AG04449 (cell line): ENCODE measurements at regions of chr10 and their contacts with region 1.

Region 1: DNA sequence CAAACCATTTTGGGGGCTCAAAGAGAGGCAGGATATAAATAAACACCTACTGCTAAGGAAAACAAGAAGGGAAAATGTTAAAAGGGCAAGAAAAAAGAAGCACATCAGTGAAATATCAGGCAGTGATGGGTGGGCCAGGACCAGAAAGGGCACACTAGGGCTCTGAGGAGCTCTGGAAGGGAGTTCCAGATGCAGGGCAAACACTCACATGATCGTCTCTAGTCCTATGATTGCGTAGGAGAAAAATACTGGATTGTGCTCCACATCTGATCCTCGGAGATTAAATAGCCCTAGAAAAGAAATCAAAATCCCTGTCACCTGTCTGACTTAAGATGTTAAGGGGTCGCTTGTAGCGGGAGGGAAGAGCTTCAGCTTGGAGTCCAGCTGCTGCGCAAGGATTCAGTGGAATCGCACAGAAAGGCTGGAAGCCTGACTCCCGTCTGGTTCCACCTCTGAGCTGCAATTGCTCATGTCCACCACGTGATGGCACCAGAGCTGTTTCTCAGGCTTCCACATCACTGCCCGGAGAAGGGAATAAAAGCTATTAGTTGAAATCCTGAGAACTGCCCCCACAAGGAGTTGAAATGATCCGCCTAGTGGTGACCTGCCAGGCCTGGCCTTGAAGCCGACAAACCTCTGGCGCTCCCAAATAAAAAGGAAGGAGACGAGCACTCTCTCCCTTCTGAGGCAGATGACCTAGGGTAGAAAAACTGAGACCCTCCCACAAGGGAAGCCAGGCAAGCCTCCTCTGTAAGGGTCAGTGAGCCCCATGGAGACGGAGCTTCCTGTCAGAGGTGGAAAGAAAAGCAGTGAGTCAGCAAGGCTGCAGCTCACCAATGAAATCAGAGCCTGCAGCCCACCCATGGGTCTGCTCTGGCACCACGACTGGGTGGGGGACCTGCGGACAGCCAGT is 39.2 kb downstream of the XPNPEP1 start:
- DNase-seq: peak; percentile 54
- H3K4me3 ChIP-seq: no peak overlapping the region
- CTCF ChIP-seq: peak; percentile 80

Region 2: DNA sequence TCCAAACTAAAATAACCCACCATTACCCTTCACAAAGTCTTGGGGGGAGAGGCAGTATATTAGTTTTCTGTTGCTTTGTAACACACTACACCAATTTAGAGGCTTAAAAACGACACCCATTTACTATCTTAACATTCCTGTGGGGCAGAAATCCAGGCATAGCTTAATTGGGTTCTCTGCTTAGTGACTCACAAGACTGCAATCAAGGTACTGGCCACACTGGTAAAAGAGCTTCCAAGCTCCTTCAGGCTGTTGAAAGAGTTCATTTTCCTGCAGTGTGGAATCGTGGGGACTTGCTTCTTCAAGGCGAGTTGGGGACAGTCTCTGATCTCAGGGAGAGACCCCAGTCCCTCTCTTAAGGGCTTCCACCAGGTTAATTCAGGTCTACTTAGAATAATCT is 99.9 kb before region 1 on chr10:
- CTCF ChIA-PET with region 1: no interaction called
- POLR2A ChIA-PET with region 1: no interaction called
- DNase-seq: peak; percentile 14
- H3K4me3 ChIP-seq: no peak overlapping the region
- CTCF ChIP-seq: no peak

Region 3: GRCh38 chr10:109914966-109915365 is 30.9 kb after region 1 on chr10:
- CTCF ChIA-PET with region 1: interaction called, 13 read pairs
- POLR2A ChIA-PET with region 1: no interaction called
- DNase-seq: peak; percentile 70
- H3K4me3 ChIP-seq: no peak overlapping the region
- CTCF ChIP-seq: no peak

Region 4: DNA sequence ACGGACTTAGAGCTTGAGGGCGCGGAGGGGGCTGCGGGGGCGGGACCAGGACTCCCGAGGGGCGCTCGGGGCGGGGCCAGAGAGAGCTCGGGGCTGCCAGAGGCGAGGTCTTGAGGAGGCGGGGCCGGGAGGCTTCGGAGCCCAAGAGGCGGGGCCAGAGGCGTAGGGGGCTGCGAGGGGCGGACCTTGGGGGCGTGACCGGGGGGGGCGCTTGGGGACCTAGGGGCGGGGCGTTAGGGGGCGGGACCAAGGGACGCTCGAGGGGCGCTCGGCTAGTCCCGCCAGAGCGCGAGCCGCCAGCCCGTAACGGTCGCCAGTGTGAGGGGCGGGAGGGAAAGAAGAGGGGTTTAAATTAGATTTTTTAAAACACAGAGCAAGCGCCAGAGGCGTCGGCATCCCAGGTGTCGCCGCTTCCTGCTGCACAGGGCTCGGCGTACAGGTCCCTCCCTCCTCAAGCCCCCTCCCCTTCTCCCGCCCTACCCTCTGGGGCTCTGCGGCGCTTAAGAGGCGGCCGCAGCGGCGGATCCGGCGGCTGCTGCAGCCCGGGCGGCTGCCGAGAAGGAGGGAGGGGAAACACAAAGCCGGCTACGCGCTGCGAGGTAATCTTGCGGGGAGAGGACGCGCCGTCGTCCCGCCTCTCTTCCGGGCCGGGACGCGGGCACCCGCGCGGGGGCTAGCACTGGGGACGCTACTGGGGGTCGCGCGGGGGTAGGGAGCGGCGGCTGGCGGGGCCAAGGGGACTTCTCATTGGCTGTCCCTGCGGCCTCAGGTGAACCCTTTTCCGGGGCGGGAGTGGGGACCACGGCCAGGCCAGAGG is 123.8 kb after region 1 on chr10 and contains the start of gene ADD3:
- CTCF ChIA-PET with region 1: interaction called, 18 read pairs
- POLR2A ChIA-PET with region 1: interaction called, 6 read pairs
- DNase-seq: peak; percentile 55
- H3K4me3 ChIP-seq: peak within 1 kb of the TSS; percentile 82
- CTCF ChIP-seq: no peak

Region 5: DNA sequence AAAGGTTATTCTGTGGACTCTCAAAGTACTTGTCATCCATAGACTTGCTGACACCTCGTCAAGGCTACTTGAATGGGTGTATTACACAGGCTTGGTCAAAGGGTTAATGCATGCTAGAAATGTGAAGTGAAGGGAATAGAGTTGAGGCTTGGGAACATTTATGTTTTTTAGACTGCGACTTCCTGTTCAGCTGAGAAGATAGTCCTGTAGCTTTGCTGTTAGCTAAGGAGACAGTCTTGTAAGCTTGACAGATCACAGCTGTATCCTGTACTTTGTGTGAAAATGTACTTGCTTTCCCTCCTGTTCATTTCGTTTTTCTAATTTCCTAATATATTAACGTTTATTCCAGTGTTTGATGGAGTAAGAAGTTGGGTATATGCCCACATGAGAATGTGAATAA is 175.8 kb after region 1 on chr10:
- CTCF ChIA-PET with region 1: interaction called, 13 read pairs
- POLR2A ChIA-PET with region 1: no interaction called
- DNase-seq: no peak
- H3K4me3 ChIP-seq: no peak overlapping the region
- CTCF ChIP-seq: no peak

Region 6: GRCh38 chr10:110110338-110110737 is 226.2 kb after region 1 on chr10:
- CTCF ChIA-PET with region 1: interaction called, 29 read pairs
- POLR2A ChIA-PET with region 1: no interaction called
- DNase-seq: no peak
- H3K4me3 ChIP-seq: no peak overlapping the region
- CTCF ChIP-seq: no peak

Region 7: GRCh38 chr10:110221721-110222261 is 337.7 kb after region 1 on chr10:
- CTCF ChIA-PET with region 1: interaction called, 15 read pairs
- POLR2A ChIA-PET with region 1: no interaction called
- DNase-seq: peak; percentile 85
- H3K4me3 ChIP-seq: peak overlapping the region; percentile 61
- CTCF ChIP-seq: peak; percentile 36